ENCODE measurements at regions of chr10 and their contacts with region 1.

Region 1: GRCh38 chr10:117216611-117217195 is 19.4 kb downstream of the KCNK18 start:
- DNase-seq: peak; percentile 68
- H3K4me3 Mint-ChIP-seq: peak overlapping the region; percentile 52
- H3K27ac Mint-ChIP-seq: no peak overlapping the region
- H3K4me1 Mint-ChIP-seq: peaks cover 7% of the 10 kb centered on the region
- H3K27me3 Mint-ChIP-seq: peaks cover 30% of the 10 kb centered on the region

Region 2: DNA sequence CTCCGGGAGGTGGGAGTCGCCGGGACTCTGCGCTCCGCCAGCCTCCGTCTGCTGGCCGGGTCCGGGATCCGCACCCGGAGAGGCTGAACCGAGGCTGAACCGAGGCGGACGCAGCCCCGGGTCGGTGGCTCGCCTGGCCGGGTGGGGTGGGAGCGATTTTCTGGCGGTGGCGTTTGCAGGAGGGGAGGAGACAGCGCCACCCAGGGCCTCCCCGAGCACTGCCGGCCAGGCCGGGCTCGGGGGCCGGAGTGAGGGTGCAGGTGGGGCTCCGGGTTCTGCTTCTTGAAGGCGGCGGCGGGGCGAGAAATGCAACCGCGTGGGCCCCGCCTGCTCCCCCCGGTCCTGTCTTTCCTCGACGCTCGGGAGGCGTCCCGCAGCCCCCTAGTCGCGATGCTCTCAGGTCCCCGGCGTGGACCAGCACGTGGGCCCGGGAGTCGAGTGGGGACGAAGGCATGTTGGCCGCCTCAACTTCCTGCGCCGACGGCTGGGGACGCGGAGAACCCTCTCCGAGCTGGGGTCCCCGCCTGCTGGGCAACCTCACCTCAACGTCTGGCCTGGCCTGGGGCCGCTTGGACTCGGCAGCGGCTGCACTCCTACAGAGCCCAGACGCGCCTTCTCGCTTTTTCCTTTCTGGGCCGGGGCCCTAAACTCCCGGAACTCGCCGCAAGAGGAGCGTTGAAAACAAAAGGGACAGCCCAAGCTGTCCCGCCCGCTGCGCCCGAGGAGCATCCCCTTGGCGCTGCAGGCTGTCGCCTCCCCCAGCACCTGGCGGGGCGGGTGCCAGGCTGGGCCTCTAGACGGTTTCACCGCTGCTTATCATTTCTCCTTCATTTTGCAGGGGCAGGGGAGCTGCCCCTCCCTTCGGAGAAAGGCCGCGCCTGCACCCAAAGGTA is 53.4 kb before region 1 on chr10:
- CTCF ChIA-PET with region 1: no interaction called
- POLR2A ChIA-PET with region 1: no interaction called
- DNase-seq: no peak
- H3K4me3 Mint-ChIP-seq: no peak overlapping the region
- H3K27ac Mint-ChIP-seq: no peak overlapping the region
- H3K4me1 Mint-ChIP-seq: peaks cover 18% of the 10 kb centered on the region
- H3K27me3 Mint-ChIP-seq: peaks cover 83% of the 10 kb centered on the region

Region 3: GRCh38 chr10:117204316-117204715 is 12.4 kb before region 1 on chr10:
- CTCF ChIA-PET with region 1: interaction called, 16 read pairs
- POLR2A ChIA-PET with region 1: no interaction called
- DNase-seq: no peak
- H3K4me3 Mint-ChIP-seq: no peak overlapping the region
- H3K27ac Mint-ChIP-seq: no peak overlapping the region
- H3K4me1 Mint-ChIP-seq: no peaks in the 10 kb centered on the region
- H3K27me3 Mint-ChIP-seq: peaks cover 3% of the 10 kb centered on the region

Region 4: DNA sequence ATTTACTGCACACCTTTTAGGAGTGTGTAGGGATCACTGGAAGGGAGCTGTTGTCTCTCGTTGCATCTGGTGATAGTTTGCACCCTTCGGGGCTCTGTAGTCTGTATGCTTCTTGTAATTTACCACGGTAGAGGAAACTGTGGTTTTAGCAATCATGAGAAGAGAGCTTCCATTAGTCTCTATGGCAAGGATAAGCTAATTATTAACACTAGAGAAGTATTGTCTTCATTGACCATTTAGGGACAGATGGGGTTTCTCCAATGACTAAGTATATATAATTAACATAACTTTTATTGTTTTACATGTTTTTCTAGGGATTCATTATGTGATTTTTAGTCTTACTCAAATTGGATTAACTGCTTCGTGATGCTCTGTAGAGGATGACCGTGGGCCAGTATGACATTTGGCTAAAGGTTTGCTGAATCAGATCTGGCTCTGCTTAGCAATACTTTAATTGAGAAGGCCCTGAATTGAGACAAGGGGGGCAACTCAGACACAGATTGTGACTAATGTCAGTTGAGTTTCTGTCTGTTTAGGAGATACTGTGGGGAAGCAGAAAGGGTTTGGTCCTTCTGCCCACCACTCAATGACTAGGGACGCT is 32.9 kb after region 1 on chr10:
- CTCF ChIA-PET with region 1: interaction called, 11 read pairs
- POLR2A ChIA-PET with region 1: no interaction called
- DNase-seq: no peak
- H3K4me3 Mint-ChIP-seq: no peak overlapping the region
- H3K27ac Mint-ChIP-seq: no peak overlapping the region
- H3K4me1 Mint-ChIP-seq: no peaks in the 10 kb centered on the region
- H3K27me3 Mint-ChIP-seq: peaks cover 24% of the 10 kb centered on the region

Region 5: GRCh38 chr10:117320050-117320665 is 103.5 kb after region 1 on chr10:
- CTCF ChIA-PET with region 1: interaction called, 107 read pairs
- POLR2A ChIA-PET with region 1: interaction called, 10 read pairs
- DNase-seq: no peak
- H3K4me3 Mint-ChIP-seq: no peak overlapping the region
- H3K27ac Mint-ChIP-seq: no peak overlapping the region
- H3K4me1 Mint-ChIP-seq: no peaks in the 10 kb centered on the region
- H3K27me3 Mint-ChIP-seq: no peaks in the 10 kb centered on the region

Measured in activated CD4-positive, alpha-beta memory T cell treated with anti-CD3 and anti-CD28 coated beads, Interleukin-2, amount 10 ng/mL, durations not matched to agents 7 days and 5 days (primary cell).